Stomach (tissue), 19 donors: ENCODE measurements at regions of chr16 and their contacts with region 1.

Region 1: DNA sequence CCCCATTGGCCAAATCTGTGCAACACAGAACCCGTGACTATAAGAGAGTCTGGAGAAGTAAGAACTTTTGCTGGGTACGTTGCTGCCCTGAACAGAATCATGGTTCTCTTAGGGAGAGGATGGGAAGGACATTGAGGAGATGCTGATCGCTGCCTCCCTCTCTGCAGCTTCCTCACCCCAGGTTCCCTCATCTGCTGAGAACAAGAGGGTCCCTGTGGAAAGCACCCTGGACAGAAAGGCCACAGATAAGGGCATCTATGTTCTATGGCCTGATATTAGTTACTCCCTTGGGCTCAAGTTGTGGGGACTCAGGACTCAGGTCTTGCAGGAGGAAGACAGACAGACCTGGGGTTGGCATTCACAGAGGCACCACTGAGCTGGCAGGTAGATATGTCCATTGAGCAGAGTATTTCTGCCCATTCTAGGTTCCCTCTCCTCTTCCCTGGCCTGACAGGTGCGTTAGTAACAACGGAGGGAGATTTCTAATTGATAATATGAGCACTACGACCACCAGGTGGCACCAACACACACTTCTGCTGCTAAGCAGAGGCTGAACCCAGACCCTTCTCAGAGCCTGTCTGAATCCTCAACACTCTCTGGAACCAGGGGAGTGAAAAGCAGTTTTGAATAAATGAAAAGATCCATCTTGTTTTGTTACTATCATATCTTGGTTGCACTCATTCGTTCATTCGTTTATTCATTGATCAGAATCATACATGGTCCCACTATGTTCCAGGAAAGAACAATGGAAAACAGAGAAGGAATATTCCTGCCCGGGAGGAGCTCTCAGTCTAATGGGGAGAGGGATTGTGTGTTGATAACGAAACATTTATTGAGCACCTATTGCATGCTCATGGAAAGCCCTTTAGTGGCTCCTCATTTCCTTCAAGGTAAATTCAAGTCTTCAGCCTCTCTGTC is 56.4 kb downstream of the SLC6A2 start:
- DNase-seq: peak; percentile 66 to 86
- H3K4me3 ChIP-seq: no peak overlapping the region
- H3K27ac ChIP-seq: no peak overlapping the region
- H3K4me1 ChIP-seq: no peaks in the 10 kb centered on the region
- H3K27me3 ChIP-seq: peaks cover 0 to 36% (median 9%) of the 10 kb centered on the region in 3 donors
- CTCF ChIP-seq: peak in 5 of 7 experiments; percentile 38 to 73 (median 58)
- EP300 ChIP-seq: no peak
- POLR2A ChIP-seq: no peak

Region 2: GRCh38 chr16:55842369-55843104 is 130.3 kb after region 1 on chr16:
- intact Hi-C with region 1: loop called (anchors 5 kb)
- DNase-seq: peak in 1 of 2 donors; percentile 74
- H3K4me3 ChIP-seq: no peak overlapping the region
- H3K27ac ChIP-seq: no peak overlapping the region
- H3K4me1 ChIP-seq: no peaks in the 10 kb centered on the region
- H3K27me3 ChIP-seq: peaks cover 0 to 50% (median 3%) of the 10 kb centered on the region in 3 donors
- CTCF ChIP-seq: peak in 5 of 7 experiments; percentile 53 to 78 (median 72)
- EP300 ChIP-seq: no peak
- POLR2A ChIP-seq: no peak